IMR-90 (cell line): ENCODE measurements at regions of chr2 and their contacts with region 1.

Region 1: DNA sequence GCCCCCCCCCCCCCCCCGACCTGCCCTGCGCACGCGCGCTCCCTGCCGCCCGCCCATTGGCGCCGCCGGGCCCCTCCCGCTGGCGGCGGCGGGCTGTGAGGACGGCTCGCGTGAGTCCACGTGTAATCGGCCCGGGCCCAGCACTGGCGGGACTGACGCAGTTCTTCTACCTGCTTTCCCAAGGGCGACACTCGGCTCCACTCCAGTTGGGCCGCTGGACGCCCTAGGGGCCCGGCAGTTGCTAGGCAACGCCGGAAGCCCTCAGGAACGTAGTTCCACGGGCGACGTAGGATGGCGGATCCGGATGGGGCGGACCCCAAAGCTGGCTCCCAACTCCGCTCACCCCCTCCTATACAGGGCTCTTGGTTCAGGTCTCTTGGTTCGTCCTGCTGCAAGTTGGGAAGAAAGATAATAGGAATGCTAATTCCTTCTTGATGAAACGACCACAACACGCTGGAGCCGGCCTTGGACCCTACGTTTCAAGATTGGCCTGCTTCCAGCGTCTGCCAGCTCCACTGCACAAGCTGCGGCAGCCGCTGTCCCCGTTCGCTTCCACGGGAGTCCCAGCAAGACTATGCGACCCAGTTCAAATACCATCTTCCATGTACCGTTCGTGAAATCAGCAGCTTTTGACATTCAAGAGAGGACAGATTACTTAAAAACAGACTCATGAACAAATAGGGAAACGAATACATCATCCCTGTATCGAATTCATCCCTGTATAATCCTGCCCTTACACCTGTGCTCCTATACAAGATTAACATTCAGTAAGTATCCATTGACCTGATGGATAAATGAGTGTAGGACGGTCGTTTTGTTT is 415 bp upstream of the MCFD2 start:
- DNase-seq: peak; percentile 91
- ATAC-seq: peak; percentile 82
- H3K4me3 ChIP-seq: peak overlapping the region; percentile 84
- H3K27ac ChIP-seq: peak overlapping the region; percentile 88
- H3K4me1 ChIP-seq: peaks cover 9% of the 10 kb centered on the region
- H3K27me3 ChIP-seq: no peaks in the 10 kb centered on the region
- CTCF ChIP-seq: no peak
- POLR2A ChIP-seq: peak; percentile 39
- RAD21 ChIP-seq: no peak

Region 2: GRCh38 chr2:46939626-46940359 is 23.8 kb after region 1 on chr2:
- CTCF ChIA-PET with region 1: interaction called, 4 read pairs
- POLR2A ChIA-PET with region 1: interaction called, 10 read pairs
- dilution Hi-C with region 1: no loop called
- in situ Hi-C with region 1: no loop called
- intact Hi-C with region 1: no loop called
- DNase-seq: no peak
- ATAC-seq: no peak
- H3K4me3 ChIP-seq: no peak overlapping the region
- H3K27ac ChIP-seq: peak overlapping the region; percentile 96
- H3K4me1 ChIP-seq: peaks cover 29% of the 10 kb centered on the region
- H3K27me3 ChIP-seq: no peaks in the 10 kb centered on the region
- CTCF ChIP-seq: no peak
- POLR2A ChIP-seq: no peak
- RAD21 ChIP-seq: no peak

Region 3: GRCh38 chr2:46967990-46968647 is 52.1 kb after region 1 on chr2:
- CTCF ChIA-PET with region 1: no interaction called
- POLR2A ChIA-PET with region 1: no interaction called
- dilution Hi-C with region 1: no loop called
- in situ Hi-C with region 1: no loop called
- intact Hi-C with region 1: loop called (anchors 5 kb)
- DNase-seq: peak; percentile 85
- ATAC-seq: peak; percentile 68
- H3K4me3 ChIP-seq: no peak overlapping the region
- H3K27ac ChIP-seq: peak overlapping the region; percentile 90
- H3K4me1 ChIP-seq: peaks cover 36% of the 10 kb centered on the region
- H3K27me3 ChIP-seq: no peaks in the 10 kb centered on the region
- CTCF ChIP-seq: no peak
- POLR2A ChIP-seq: no peak
- RAD21 ChIP-seq: no peak

Region 4: DNA sequence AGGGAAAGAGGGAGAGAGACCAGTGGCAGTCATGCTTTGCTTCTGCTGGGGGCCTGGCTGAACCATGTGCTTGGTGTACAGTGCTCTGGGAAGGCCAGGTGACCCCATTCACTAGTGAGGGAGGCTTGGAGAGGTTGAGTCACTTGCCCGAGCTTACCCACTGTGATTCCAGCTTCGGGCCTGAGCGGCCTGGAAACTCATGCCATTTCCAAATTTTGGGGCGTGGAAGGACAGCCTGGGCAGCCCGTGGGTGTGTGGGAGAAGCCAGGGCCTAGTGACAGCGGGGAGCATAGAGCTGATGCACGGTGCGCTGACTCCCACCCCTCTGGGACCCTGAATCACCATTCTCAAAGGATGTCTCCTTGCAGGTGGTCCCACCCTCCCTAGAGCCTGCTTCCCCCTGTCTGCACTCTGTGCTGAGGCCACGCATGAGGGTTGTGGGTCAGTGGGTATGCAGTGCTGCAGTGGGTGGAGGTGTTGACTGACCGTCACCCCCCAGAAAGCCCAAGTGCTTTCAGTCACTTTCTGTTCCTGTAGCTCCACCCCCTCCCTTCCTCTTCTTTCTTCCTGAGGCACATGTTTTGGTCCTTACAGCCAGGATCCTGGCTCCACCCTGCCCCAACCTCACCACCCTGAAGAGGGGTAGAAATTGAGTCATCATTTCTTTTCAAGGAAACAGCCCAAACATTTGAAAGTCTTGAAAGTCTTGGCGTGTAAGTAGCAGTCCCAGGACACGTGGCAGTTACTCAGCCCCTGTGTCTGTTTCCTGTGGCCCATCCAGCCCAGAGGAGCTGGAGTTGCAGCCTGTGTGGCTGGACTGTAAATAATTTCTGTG is 68.8 kb after region 1 on chr2:
- CTCF ChIA-PET with region 1: no interaction called
- POLR2A ChIA-PET with region 1: no interaction called
- dilution Hi-C with region 1: no loop called
- in situ Hi-C with region 1: no loop called
- intact Hi-C with region 1: loop called (anchors 2 kb)
- DNase-seq: peak; percentile 97
- ATAC-seq: peak; percentile 75
- H3K4me3 ChIP-seq: no peak overlapping the region
- H3K27ac ChIP-seq: peak overlapping the region; percentile 82
- H3K4me1 ChIP-seq: peaks cover 47% of the 10 kb centered on the region
- H3K27me3 ChIP-seq: no peaks in the 10 kb centered on the region
- CTCF ChIP-seq: no peak
- POLR2A ChIP-seq: peak; percentile 50; the same call in 1 of the 2 replicates
- RAD21 ChIP-seq: no peak; the same call in 1 of the 2 replicates